ENCODE measurements at regions of chr17 and their contacts with region 1.

Region 1: DNA sequence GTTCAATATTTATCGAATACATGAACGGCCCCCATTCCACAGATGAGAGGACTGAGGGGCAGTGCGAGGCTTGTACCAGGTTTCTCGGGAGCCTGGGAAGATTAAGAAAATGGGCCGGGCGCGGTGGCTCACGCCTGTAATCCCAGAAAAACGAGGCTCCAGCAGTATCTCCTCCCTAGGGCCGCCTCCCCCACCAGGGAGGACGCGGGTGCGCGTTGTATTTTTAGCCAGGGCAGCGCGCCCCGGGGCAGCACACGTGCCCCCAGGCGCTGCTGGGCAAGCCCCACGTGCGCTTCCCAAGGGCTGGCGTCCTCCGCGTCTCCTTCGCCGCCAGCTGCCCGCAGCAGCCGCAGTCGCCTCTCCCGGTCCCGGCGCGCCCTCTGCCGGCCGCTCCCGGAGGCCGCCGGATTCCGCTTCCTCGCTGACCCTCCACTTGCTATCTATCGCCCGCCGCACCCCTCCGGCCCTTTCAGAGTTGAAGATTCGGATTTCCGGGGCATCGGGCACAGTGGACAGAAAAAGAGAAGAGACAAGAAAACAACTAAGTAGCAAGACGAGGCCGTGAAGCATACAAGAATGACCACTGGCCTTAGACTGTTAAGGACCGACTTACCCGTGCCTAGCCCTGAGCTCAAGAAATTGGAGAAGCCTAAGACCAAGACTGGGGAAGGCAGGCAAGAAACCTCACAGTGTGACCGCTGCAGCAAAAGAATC is 1.9 kb upstream of the YBX2 start:
- DNase-seq: peak; percentile 86 to 93 (median 90)
- ATAC-seq: peak; percentile 73 to 86 (median 78)
- H3K4me3 ChIP-seq: peak overlapping the region in 9 of 12 donors; percentile 5 to 37 (median 26)
- H3K27ac ChIP-seq: peak overlapping the region; percentile 11 to 85 (median 72)
- H3K4me1 ChIP-seq: peaks cover 2 to 56% (median 39%) of the 10 kb centered on the region in 12 donors
- H3K27me3 ChIP-seq: peaks cover 0 to 48% (median 29%) of the 10 kb centered on the region in 9 donors
- CTCF ChIP-seq: peak; percentile 87 to 98 (median 95)
- POLR2A ChIP-seq: peak in 1 of 2 donors; percentile 38

Region 2: GRCh38 chr17:7045909-7046724 is 250.2 kb before region 1 on chr17:
- intact Hi-C with region 1: loop called in 3 of 10 experiments (anchors 5 to 10 kb)
- DNase-seq: no peak
- ATAC-seq: peak in 2 of 4 donors; percentile 31 to 48
- H3K4me3 ChIP-seq: peak overlapping the region in 9 of 12 donors; percentile 22 to 46 (median 26)
- H3K27ac ChIP-seq: peak overlapping the region in 2 of 12 donors; percentile 24 to 68
- H3K4me1 ChIP-seq: peaks cover 0 to 41% (median 28%) of the 10 kb centered on the region in 12 donors
- H3K27me3 ChIP-seq: peaks cover 0 to 43% (median 21%) of the 10 kb centered on the region in 9 donors
- CTCF ChIP-seq: peak; percentile 65 to 89 (median 80)
- POLR2A ChIP-seq: no peak

Region 3: GRCh38 chr17:7056386-7056785 is 240.0 kb before region 1 on chr17:
- intact Hi-C with region 1: loop called in 1 of 10 experiments (anchors 2 kb)
- DNase-seq: no peak
- ATAC-seq: no peak
- H3K4me3 ChIP-seq: no peak overlapping the region
- H3K27ac ChIP-seq: no peak overlapping the region
- H3K4me1 ChIP-seq: no peaks in the 10 kb centered on the region
- H3K27me3 ChIP-seq: peaks cover 0 to 7% (median 0%) of the 10 kb centered on the region in 9 donors
- CTCF ChIP-seq: no peak
- POLR2A ChIP-seq: no peak

Region 4: DNA sequence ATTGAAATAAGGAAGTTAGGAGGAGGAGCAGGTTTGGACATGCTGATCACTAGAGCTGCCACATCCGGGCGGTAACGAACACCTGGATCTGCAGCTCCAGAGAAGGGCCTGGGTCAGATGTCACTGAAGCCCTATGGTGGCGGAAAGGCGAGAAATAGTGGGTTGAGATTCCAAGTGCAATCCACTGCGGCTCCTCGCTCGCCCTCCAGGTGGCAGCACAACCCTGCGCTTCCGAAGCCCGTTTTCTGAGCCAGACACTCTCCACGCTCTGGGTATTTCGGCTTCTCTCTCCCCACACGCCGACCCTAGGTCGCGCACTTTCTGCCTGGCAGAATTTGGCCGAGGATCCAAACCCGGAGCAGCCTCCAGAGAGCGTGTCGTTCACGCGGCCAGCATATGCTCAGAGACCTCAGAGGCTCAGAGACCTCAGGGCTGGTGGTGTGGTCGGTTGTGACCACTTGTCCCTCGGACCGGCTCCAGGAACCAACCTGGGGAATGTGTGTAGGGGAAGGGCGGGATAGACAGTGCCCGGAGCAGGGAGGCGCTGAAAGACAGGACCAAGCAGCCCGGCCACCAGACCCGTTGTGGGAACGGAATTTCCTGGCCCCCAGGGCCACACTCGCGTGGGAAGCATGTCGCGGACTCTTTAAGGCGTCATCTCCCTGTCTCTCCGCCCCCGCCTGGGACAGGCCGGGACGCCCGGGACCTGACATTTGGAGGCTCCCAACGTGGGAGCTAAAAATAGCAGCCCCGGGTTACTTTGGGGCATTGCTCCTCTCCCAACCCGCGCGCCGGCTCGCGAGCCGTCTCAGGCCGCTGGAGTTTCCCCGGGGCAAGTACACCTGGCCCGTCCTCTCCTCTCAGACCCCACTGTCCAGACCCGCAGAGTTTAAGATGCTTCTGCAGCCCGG is 15.6 kb before region 1 on chr17:
- intact Hi-C with region 1: loop called in 9 of 10 experiments (anchors 1 kb)
- DNase-seq: peak; percentile 86 to 94 (median 90)
- ATAC-seq: peak; percentile 69 to 77 (median 72)
- H3K4me3 ChIP-seq: peak overlapping the region in 11 of 12 donors; percentile 26 to 76 (median 65)
- H3K27ac ChIP-seq: peak overlapping the region; percentile 90 to 99 (median 96)
- H3K4me1 ChIP-seq: peaks cover 4 to 49% (median 21%) of the 10 kb centered on the region in 12 donors
- H3K27me3 ChIP-seq: peaks cover 0 to 24% (median 3%) of the 10 kb centered on the region in 9 donors
- CTCF ChIP-seq: peak; percentile 84 to 97 (median 94)
- POLR2A ChIP-seq: no peak

Measured in heart left ventricle (tissue), 16 donors.